Left cardiac atrium (tissue), 4 donors: ENCODE measurements at regions of chr11 and their contacts with region 1.

Region 1: DNA sequence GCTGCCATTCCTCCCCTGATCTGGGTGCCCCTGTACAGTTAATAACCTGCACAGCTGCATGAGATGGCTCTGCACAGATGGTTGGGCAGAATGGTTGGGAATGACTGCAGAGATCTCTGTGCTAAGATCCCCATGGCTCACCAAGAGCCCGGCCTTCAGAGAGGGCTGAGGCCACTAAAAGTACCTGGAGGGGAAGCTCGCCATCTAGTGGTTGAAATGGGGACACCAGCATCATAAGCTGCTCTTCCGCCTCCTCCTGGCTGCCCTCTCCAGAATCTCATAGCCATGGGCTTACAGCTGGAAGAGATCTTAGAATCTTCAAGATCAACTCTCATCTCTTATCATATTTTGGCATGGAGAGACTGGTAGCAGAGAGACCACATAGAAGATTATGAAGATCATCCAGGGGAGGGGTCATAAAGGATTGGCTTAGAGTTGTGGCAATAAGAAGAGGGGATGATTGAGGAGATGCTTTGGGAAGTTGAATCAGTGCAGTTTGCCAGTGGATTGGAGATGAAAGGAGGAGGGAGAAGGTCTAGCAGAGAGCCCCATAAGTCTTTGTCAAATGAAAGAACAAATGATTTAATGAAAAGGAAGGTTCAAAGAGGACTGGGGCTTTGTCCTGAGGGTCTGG is 22.0 kb upstream of the TLCD5 start:
- DNase-seq: peak; percentile 77
- ATAC-seq: peak; percentile 74

Region 2: DNA sequence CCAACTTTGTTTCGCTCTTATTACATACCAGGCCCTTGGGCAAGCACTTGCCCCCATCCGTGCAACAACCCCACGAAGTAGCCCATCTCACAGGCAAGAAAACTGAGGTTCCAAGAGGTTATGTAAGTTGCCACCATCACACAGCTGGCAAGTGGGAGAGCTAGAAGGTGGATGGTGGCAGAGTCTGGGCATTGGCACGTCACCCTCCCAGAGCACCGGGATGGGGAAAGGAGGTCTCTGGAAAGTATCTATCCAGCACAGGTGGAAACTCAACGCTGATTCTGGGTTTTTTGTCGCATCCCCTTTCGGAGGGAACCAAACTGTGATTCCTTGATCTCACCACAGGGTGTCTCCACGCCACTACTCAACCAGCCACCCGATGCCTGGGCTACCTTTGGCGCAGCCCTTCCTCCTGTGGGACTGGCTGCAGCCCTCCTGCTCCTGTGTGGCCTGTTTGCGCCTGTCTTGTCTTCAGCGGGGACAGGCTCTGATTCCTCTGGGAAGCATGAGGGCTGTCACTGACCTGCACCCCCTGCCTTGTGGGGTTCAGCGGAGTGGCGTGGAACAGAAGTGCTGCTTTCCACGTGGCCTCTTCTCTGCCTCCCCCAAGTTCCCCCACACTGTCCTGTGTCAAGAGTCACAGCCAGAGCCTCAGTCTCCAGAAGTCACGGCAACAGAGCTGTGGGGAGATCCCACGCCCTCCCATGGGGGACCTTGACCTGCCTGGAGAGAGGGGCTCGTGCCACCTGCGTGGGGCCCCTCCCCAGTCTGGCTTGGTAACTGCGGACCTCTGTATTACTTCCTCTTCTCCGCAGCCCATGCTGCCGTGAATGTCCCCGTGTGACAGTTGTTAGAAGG is 130.8 kb before region 1 on chr11:
- intact Hi-C with region 1: loop called (anchors 2 kb)
- DNase-seq: peak; percentile 80
- ATAC-seq: peak; percentile 52 to 56

Region 3: GRCh38 chr11:120235024-120235861 is 67.9 kb before region 1 on chr11:
- intact Hi-C with region 1: loop called (anchors 1 to 2 kb)
- DNase-seq: peak; percentile 63
- ATAC-seq: peak; percentile 68 to 71

Region 4: DNA sequence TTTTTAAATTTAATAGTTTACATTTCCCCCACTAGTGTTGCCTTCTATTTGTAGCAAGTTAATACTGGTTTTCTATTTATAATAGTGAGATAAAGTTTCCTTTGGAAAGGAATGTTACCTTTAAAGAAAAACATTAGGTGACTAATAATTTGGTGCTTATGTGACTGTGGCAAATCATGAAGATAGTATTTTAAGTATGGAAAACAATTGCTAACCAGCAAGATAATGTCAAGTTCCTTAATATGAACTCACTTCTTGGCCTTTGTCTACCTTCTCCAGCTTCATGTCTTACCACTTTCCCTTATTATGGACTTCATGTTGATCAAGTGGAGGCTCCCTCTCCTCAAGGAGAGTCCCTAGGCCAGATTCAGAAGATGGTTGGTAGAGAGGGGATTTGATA is 60.3 kb after region 1 on chr11:
- intact Hi-C with region 1: no loop called
- DNase-seq: no peak
- ATAC-seq: no peak